ENCODE measurements at regions of chr6 and their contacts with region 1.

Region 1: DNA sequence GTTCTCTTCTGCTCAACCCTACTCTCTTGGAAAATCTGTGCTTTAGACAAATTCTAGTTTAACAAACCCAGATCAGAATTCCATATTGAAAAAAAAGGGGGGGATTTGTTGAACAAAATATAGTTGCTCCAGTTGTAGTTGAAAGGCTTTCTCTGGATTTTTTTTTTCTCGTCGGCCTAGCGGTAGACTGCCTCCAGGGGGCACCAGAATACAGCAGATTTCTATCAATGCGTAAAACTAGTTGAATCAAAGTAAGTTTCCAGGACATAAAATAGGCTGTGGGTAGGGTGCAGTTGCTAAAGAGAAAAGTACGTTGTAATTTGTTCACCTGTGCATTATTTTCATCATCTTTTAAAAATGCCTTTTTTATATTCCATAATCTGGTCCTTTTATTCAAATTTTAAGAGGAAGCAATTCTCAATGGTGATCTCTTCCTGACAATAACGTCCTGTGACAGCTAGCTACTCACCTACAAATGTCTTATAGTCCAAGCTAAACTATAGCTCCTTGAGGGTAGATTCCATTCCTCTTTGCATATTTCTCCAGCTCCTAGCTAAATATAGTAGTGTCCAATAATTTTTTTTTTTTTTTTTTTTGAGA is 105.4 kb downstream of the PERP start:
- DNase-seq: no peak
- ATAC-seq: peak; percentile 70 to 71
- H3K4me3 ChIP-seq: no peak overlapping the region
- H3K27ac ChIP-seq: no peak overlapping the region
- H3K4me1 ChIP-seq: no peaks in the 10 kb centered on the region
- H3K27me3 ChIP-seq: no peaks in the 10 kb centered on the region
- CTCF ChIP-seq: peak; percentile 87

Region 2: DNA sequence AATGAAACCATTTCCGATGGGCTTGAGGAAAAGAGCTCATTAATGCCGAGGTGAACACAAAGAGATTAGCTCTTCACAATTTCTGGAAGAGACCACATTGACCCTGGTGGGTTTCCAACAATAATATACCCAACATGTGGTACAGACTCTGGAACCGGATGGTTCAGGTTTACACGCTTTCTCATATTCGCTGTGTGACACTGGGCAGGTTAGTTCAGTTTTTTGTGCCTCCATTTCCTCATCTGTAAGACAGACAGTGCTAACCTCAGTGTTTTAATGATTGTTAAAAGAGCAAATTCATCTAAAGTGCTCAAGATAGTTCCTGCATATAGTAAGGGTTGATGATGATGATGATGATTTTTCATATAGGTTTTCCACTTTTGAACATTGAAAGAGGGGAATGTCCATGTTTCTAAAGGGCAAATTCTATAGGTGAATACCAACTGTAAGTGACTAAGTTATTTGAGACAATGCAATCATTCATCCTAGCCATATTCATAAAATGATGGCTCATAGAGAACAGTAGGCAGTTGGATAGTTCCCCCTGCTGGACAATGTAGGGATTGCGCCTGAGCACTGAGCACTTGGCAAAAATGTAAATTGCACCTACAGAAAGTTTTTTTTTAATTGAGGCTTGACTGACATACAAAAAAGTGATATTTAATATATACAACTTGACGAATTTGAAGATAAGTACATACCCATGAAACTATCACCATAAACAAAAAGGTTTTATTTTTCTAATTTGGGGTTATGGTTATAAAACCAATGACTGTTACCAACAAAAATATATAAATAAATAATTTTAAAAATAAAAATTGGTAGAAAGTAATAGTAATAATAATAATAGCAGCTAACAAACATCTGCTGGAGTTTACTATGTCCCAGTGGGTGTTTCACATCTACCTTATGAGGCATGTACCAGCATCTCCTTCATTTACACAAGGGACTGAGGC is 107.5 kb after region 1 on chr6:
- intact Hi-C with region 1: loop called (anchors 5 kb)
- DNase-seq: peak; percentile 55
- ATAC-seq: peak in 1 of 2 donors; percentile 56
- H3K4me3 ChIP-seq: no peak overlapping the region
- H3K27ac ChIP-seq: no peak overlapping the region
- H3K4me1 ChIP-seq: no peaks in the 10 kb centered on the region
- H3K27me3 ChIP-seq: peaks cover 17% of the 10 kb centered on the region
- CTCF ChIP-seq: peak; percentile 98

Region 3: DNA sequence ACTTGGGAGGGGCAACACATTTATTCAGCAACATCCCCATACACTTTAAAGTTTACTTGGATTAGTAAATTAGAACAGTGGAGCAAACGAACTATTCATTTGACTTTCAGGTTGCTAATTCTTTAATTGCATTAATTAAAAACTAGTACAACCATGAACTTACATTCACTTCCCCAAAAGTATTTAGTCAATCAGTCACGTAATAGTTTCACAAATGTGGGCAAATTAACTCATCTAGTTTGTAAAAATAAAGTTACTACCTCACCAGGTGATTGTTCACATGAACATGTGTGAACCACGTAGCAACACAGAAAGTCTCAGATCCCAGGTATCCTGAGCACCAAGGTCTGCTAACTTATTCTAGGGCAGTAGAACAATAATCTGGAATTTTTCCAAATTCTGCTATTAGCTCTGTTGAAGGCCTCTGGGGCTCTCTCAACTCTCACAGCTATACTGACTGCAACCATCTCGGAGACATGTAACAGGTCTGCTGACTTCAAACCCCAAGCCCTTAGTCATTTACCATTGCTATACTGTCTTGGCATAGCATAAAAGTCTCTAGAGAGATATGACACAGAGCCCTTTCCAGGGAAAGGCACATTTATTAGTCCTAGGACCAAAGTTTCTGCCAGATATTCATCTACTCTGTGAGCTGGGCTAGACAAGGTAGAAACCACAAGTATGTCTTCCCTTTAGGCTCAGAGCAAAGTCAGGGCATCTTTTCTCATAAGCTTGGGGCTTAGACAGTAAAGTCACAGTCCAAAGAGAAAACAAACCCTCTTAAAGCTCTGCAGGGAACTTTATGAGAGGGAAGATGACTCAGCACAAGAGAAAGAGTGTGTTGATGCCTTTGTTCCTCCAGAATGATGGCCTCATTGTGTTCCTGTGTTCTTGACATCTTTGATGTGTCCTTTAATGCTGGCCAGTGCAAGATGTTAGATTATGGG is 720.8 kb after region 1 on chr6:
- intact Hi-C with region 1: no loop called
- DNase-seq: no peak
- ATAC-seq: peak in 1 of 2 donors; percentile 49
- H3K4me3 ChIP-seq: no peak overlapping the region
- H3K27ac ChIP-seq: no peak overlapping the region
- H3K4me1 ChIP-seq: peaks cover 15% of the 10 kb centered on the region
- H3K27me3 ChIP-seq: no peaks in the 10 kb centered on the region
- CTCF ChIP-seq: no peak